Left cardiac atrium (tissue), 4 donors: ENCODE measurements at regions of chr18 and their contacts with region 1.

Region 1: DNA sequence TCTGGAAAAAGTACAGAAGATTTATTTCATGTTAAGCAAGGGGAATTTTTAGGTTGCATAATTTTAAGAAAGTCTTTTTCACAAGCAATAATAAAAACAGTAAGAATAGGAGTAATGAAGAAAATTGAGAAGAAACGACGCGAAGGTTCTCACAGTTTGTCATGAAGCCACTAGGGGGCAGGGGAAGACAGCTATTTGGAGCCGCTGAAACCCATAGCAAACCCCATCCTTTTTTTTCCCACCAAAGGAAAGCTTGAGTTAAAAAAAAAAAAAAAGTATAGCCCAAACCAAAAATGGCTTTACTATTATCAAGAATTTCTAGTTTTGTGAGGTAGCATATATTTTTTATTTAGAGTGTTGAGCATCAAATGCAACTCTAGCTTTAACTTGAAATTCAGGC is 300.9 kb downstream of the PHLPP1 start:
- DNase-seq: peak; percentile 40
- ATAC-seq: peak; percentile 58 to 87

Region 2: DNA sequence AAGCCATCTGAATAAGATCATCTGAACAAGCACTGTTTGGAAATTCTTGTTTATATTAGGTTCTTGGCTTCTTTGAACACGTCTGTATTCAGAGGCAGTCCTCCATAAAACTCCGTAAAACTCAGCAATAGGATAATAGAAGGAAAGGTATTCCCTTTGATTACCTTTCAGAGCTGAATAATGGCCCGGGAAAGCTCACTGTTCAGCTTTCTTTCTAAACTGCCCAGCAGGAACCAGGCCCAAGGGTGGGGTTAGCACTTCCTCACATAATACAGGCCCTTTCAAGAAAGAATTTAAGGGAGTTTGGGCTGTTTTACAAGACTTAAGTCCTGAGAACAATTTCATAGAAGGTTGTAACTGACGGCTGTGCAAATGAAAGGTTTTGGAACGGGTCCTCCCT is 373.1 kb before region 1 on chr18:
- intact Hi-C with region 1: no loop called
- DNase-seq: no peak
- ATAC-seq: no peak

Region 3: GRCh38 chr18:63155169-63155852 is 139.0 kb after region 1 on chr18:
- intact Hi-C with region 1: loop called (anchors 1 to 10 kb)
- DNase-seq: peak; percentile 69
- ATAC-seq: peak; percentile 80 to 89

Region 4: DNA sequence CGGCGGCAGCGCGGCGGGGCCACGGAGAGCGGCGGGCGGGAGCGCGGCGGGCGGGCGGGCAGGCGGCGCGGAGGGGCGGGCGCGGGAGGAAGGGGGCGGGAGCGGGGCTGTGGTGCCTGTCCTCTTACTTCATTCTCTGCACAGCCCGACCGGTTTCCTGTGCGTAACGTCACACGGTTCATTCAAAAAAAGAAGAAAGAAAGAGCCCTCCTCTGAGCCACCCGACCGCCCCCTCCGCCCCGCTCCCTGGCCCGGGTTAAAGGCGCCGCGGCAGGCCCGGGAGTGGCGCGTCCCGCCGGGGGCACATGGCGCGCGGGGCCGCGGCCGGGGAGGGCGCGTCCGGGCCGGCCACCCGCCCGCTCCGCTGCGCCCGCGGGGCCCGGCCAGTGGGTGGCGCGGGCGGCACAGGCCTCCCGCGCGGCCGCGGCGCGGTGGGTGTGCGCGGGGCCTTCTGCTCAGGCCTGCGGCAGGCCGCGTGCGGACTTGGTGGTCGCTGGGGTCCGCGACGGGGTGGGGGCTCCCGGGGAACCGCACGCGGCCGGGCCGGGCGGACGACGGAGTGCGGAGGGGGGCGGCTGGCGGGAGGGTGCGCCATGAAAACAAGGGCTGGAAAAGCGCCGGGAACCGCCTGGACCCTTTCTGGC is 303.9 kb after region 1 on chr18:
- intact Hi-C with region 1: loop called (anchors 2 to 5 kb)
- DNase-seq: peak; percentile 84
- ATAC-seq: peak; percentile 74 to 80

Region 5: DNA sequence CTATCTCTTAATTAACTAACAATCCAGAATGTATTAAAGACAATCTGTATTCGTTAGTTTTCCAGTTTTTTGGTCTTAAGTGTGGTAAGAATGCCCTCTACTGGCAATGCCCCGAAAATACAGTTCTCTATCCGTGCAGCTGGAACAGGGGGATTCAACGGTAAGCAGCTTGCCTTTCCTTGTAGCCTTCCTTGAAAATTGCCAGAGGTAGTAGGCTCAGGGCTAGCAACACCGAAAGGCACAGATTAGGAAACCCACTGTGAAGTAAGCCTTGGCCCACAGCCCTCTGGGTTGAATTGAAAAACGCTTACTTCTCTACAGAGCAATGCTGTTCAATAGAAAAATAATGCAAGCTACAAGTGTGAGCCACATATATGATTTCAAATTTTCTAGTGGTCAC is 423.1 kb after region 1 on chr18:
- intact Hi-C with region 1: loop called (anchors 2 to 10 kb)
- DNase-seq: no peak
- ATAC-seq: peak; percentile 65 to 74